Activated T-helper 2 cell treated with anti-CD3 and anti-CD28 coated beads, Interferon-gamma antibody, Interleukin-2, Interleukin-4, amounts not matched to agents 10 μg/mL and 5 μg/mL and 100 μg/mL, durations not matched to agents 14 hours and 24 hours and 36 hours (primary cell): ENCODE measurements at regions of chr12 and their contacts with region 1.

Region 1: DNA sequence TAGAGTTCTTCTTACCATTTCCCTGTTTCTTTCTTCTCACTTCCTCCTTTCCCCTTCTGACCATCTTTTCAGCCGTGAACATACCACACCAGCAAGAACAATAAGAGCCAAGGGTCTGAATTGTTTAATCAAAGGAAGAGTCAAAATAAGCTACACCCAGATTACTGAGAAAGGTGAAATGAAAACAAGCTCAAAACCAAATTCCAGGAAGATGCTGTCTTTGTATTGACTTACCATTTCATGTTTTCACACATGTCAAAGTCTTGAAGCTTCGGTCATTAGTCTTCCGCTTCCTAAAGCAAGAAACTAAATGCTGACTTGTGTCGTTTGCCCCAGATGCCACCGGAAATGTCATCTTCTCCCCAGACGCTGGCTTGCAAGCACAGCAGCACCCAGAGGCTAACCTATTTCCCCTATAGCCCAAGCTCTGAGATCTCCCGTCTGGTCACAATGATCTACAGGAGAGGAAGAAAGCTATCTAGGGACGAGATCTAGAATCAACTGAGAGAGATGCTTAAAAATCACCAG is 136.5 kb upstream of the AMIGO2 start:
- DNase-seq: peak; percentile 72
- H3K4me3 Mint-ChIP-seq: peak overlapping the region; percentile 97
- H3K27ac Mint-ChIP-seq: peak overlapping the region; percentile 96
- H3K4me1 Mint-ChIP-seq: peaks cover 52% of the 10 kb centered on the region
- H3K27me3 Mint-ChIP-seq: no peaks in the 10 kb centered on the region

Region 2: GRCh38 chr12:45990468-45991283 is 1225.5 kb before region 1 on chr12 and contains the start of gene SCAF11:
- intact Hi-C with region 1: loop called (anchors 2 kb)
- DNase-seq: peak; percentile 100
- H3K4me3 Mint-ChIP-seq: peak within 1 kb of the TSS; percentile 93
- H3K27ac Mint-ChIP-seq: peak within 1 kb of the TSS; percentile 98
- H3K4me1 Mint-ChIP-seq: peaks cover 38% of the 10 kb centered on the region
- H3K27me3 Mint-ChIP-seq: peaks cover 6% of the 10 kb centered on the region
- total RNA-seq, gene SCAF11: 125 and 128 TPM in 2 replicates

Region 3: GRCh38 chr12:46450279-46450748 is 765.9 kb before region 1 on chr12:
- intact Hi-C with region 1: loop called (anchors 10 kb)
- DNase-seq: no peak
- H3K4me3 Mint-ChIP-seq: no peak overlapping the region
- H3K27ac Mint-ChIP-seq: no peak overlapping the region
- H3K4me1 Mint-ChIP-seq: peaks cover 41% of the 10 kb centered on the region
- H3K27me3 Mint-ChIP-seq: no peaks in the 10 kb centered on the region

Region 4: GRCh38 chr12:47190271-47190750 is 25.9 kb before region 1 on chr12:
- intact Hi-C with region 1: loop called (anchors 2 kb)
- DNase-seq: no peak
- H3K4me3 Mint-ChIP-seq: no peak overlapping the region
- H3K27ac Mint-ChIP-seq: peak overlapping the region; percentile 77
- H3K4me1 Mint-ChIP-seq: peaks cover 64% of the 10 kb centered on the region
- H3K27me3 Mint-ChIP-seq: no peaks in the 10 kb centered on the region

Region 5: DNA sequence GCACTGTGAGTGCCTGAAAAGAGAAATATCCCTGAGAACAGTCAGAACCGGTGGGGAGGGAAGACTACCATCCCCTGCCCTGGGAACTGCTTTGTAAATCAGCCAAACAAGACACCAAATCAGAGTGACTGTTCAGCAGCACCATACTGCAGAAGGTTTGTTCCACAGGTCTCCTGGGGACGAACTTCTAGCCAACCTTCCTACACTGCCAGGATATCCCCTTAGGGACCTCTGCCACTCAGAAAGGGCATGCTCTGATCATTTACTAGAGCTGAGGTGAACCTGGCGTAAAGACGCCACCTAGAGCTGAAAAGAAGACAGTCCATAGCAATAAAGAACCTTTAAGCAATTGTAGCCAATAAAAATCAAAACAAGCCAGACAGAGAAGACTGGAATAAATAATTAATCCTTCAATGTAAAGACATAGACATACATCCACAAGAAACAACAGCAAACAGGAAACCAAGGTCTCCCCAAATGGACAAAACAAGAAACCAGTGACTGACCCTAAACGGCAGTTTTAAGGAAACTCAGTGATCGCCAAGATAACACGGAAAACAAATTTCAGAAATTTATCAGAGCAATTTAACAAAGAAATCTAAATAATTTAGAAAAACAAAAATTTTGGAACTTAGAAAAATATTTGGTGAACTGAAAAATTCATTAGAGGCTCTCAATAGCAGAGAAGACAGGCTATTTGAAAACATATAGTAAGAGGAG is 91.6 kb after region 1 on chr12:
- intact Hi-C with region 1: loop called (anchors 1 kb)
- DNase-seq: peak; percentile 46
- H3K4me3 Mint-ChIP-seq: peak overlapping the region; percentile 89
- H3K27ac Mint-ChIP-seq: peak overlapping the region; percentile 91
- H3K4me1 Mint-ChIP-seq: peaks cover 47% of the 10 kb centered on the region
- H3K27me3 Mint-ChIP-seq: no peaks in the 10 kb centered on the region

Region 6: DNA sequence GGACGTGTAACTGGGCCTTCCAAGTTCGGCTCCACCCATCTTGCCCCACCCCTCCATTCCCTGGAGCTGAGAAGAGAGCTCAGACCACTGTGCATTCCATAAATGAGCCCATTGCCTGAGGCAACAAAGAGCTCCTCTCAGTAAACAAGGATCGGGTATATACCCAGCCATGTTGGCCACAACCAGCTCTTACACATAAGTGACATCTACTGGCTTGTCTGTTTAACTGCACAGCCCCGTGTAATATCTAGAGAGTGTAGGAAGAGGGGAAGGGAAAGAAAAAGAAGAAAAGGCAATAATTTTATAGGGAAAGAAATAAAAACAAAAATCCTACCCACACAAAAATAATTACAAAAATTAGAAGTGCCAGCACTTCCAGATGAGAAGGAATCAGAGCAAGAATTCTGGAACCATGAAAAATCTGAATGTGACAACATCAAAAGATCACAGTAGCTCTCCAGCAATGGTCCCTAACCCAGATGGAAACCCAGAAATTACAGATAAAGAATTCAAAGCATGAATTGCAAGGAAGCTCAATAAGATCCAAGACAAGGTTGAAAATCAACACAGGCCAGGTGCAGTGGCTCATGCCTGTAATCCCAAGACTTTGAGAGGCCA is 181.6 kb after region 1 on chr12:
- intact Hi-C with region 1: loop called (anchors 1 kb)
- DNase-seq: no peak
- H3K4me3 Mint-ChIP-seq: no peak overlapping the region
- H3K27ac Mint-ChIP-seq: peak overlapping the region; percentile 84
- H3K4me1 Mint-ChIP-seq: peaks cover 80% of the 10 kb centered on the region
- H3K27me3 Mint-ChIP-seq: no peaks in the 10 kb centered on the region